PC-3 (cell line): ENCODE measurements at regions of chr21 and their contacts with region 1.

Region 1: GRCh38 chr21:45405818-45406762 is 1.1 kb downstream of the COL18A1 start:
- DNase-seq: peak; percentile 63
- ATAC-seq: peak; percentile 29
- H3K4me3 ChIP-seq: peak overlapping the region; percentile 68
- H3K27ac ChIP-seq: peak overlapping the region; percentile 30
- H3K4me1 ChIP-seq: peaks cover 49% of the 10 kb centered on the region
- H3K27me3 ChIP-seq: no peaks in the 10 kb centered on the region
- CTCF ChIP-seq: no peak

Region 2: DNA sequence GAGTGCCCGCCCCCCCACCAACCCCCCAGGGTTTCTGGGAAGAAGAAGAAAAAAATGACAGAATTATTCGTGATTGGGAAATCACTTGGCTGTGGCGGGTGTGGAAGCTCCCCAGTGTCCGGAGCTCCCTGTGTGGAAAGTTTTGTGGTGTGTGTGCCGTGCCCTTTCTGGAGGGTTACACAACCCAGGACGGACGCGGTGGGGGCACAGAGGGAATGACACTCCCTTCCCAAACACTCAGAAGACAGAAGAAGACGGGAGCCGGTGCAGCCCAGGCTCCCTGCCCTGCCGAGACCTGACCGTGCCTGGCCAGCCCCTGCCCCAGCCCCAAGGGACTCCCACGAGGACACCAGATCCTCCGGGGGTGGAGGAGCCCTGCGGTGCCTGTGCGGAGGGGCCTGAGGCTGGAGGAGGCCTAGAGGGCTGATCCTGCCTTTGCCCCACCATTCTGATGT is 364.7 kb before region 1 on chr21:
- CTCF ChIA-PET with region 1: no interaction called
- POLR2A ChIA-PET with region 1: no interaction called
- intact Hi-C with region 1: no loop called
- DNase-seq: no peak
- ATAC-seq: no peak
- H3K4me3 ChIP-seq: no peak overlapping the region
- H3K27ac ChIP-seq: no peak overlapping the region
- H3K4me1 ChIP-seq: no peaks in the 10 kb centered on the region
- H3K27me3 ChIP-seq: no peaks in the 10 kb centered on the region
- CTCF ChIP-seq: no peak

Region 3: DNA sequence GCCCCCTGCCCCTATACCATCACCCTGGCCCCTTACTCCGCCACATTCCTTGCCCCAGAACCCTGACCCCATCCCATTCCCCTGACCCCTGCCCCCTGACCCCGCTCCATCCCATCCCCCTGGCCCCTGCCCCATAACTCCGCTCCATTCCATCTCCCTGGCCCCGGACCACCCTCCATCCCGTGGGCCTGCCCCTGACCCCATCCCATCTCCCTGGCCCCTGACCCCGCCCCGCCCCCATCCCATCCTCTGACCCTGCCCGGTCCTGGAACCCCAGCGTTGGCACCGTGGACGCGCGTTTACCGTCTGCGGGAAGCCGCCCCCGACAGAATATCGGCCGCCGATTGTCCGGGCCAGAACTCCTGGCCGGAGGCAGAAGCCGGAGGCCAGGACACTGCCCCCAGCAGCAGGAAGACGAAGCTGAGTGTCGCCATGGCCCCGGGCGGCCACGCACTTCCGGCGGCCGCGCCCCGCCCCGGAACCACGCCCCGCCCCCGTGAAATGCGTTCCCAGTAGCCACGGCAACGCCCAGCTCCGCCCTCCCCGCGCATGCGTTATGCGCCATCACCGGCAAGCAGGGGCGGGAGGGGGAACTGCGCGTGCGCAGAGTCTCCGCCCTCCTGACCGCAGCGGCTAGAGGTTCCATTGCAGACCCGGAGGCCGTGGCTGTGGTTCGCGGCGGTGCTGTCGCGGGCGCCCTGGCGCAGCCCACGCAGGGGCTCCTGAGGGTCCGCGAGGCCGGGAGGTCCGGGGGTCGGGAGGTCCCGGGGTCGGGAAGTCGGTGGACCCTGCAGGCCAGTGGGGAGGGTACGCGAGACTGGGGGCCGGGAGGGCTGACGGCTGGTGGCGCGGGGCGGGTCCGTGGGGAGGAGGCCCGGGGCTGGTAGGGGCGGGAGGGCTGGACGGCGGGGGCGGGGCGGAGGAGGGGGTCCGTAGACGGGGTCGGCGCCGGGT is 118.4 kb before region 1 on chr21 and contains the start of gene POFUT2:
- CTCF ChIA-PET with region 1: no interaction called
- POLR2A ChIA-PET with region 1: no interaction called
- intact Hi-C with region 1: loop called (anchors 1 kb)
- DNase-seq: peak; percentile 98
- ATAC-seq: peak; percentile 65
- H3K4me3 ChIP-seq: peak within 1 kb of the TSS; percentile 92
- H3K27ac ChIP-seq: no peak within 1 kb of the TSS
- H3K4me1 ChIP-seq: peaks cover 16% of the 10 kb centered on the region
- H3K27me3 ChIP-seq: no peaks in the 10 kb centered on the region
- CTCF ChIP-seq: no peak
- total RNA-seq, gene POFUT2: 19.6 and 28.2 TPM in 2 replicates

Region 4: DNA sequence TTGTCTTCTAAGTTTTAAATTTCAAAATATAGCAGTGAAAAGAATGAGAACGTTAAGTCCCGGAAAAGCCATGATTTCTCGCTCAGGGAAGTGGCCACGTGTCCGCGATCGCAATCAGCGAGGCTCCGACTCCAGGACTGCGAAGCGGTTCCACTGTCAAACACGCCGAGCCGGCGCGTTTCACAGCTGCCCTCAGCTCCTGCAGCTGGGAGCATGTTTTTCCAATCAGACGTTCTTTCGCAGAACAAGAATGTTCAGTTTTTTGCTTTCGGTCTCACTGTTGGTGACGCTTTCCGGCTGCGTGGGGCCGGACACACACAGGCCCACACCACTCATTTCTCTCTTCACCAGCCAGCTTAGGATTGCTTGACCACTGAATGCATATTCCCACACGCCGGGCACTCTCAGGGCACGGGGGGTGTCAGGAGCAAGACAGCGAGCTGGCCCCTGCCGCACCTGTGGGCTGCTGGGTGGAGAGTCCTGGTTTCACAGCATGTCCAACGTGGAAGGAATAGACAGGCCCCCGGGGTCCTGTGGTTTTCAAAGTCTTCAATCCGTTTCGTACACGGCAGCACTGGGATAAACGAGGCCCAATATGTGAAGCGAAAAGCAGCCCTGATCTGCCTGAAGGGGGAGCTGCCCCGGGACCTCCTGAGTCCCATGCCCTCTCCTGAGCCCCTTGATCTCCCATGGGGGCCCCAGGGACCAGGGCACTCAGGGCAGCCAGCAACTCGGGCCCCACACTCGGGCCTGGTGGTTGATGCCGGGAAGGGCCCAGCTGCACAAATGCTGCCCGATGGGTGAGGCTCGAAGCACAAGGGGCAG is 48.4 kb before region 1 on chr21:
- CTCF ChIA-PET with region 1: no interaction called
- POLR2A ChIA-PET with region 1: no interaction called
- intact Hi-C with region 1: no loop called
- DNase-seq: no peak
- ATAC-seq: no peak
- H3K4me3 ChIP-seq: no peak overlapping the region
- H3K27ac ChIP-seq: no peak overlapping the region
- H3K4me1 ChIP-seq: no peaks in the 10 kb centered on the region
- H3K27me3 ChIP-seq: no peaks in the 10 kb centered on the region
- CTCF ChIP-seq: peak; percentile 44; the same call in 1 of the 2 replicates

Region 5: GRCh38 chr21:45443595-45444181 is 37.6 kb after region 1 on chr21:
- CTCF ChIA-PET with region 1: no interaction called
- POLR2A ChIA-PET with region 1: no interaction called
- intact Hi-C with region 1: no loop called
- DNase-seq: peak; percentile 21
- ATAC-seq: no peak
- H3K4me3 ChIP-seq: no peak overlapping the region
- H3K27ac ChIP-seq: no peak overlapping the region
- H3K4me1 ChIP-seq: peaks cover 6% of the 10 kb centered on the region; the same call in 1 of the 2 replicates
- H3K27me3 ChIP-seq: no peaks in the 10 kb centered on the region
- CTCF ChIP-seq: peak; percentile 43; the same call in 1 of the 2 replicates